Motor neuron (in vitro differentiated cells): ENCODE measurements at regions of chr3 and their contacts with region 1.

Region 1: DNA sequence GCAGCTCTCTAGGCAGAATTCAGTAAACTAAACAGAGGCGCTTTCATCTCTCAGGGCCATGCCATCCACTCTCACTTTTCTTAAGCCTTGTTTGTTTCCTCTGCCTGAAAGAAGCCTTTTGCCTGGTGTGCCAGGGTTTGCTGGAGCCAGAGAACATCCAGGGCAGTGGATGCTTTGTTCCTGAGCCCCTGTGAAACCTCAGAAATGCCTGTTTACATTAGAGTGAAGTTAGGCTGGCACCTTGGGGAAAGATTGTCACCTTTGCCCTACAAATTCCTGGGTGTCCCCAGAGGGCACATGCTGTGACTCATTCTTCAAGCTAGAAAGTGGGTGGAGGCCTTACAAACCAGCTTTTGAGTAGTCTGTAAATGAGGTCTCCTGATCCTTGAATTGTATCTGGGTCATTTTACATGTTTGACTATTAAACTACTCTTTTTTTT is 10.7 kb upstream of the TRAK1 start:
- ATAC-seq: peak in 7 of 8 experiments; percentile 14 to 95 (median 79)
- H3K4me3 ChIP-seq: no peak overlapping the region
- H3K27ac ChIP-seq: no peak overlapping the region
- H3K4me1 ChIP-seq: peaks cover 8 to 21% of the 10 kb centered on the region in 2 donors

Region 2: DNA sequence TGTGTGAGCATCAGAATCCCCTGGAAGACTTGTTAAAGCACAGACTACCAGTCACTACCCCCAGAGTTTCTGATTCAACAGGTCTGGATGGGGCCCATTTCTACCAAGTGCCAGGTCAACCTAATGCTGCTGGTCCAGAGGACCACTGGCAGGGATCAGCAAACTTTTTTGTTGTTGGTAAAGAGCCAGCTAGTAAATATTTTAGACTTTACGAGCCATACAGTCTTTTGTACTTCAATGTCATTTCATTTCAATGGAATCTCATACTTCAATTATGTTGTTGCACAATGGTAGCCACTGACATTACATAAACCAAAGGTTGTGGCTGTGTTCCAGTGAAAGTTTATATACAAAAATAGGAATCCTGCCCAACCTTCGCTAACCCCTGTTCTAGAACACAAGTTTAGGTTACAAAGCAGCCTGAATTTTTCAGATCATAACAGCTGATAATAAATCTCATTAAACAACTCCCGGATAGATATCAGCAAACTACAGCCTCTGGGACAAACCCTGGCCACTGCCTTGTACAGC is 147.3 kb before region 1 on chr3:
- in situ Hi-C with region 1: loop called in 1 of 9 experiments (anchors 25 kb)
- ATAC-seq: no peak
- H3K4me3 ChIP-seq: no peak overlapping the region
- H3K27ac ChIP-seq: no peak overlapping the region
- H3K4me1 ChIP-seq: no peaks in the 10 kb centered on the region